Activated CD4-positive, alpha-beta T cell treated with anti-CD3 and anti-CD28 coated beads, Interleukin-2, amount 10 ng/mL, durations not matched to agents 24 days and 14 days (primary cell): ENCODE measurements at regions of chr11 and their contacts with region 1.

Region 1: GRCh38 chr11:61061081-61061826 is 41.0 kb upstream of the CD5 start:
- DNase-seq: peak; percentile 91
- H3K4me3 Mint-ChIP-seq: peak overlapping the region; percentile 73
- H3K27ac Mint-ChIP-seq: peak overlapping the region; percentile 91
- H3K4me1 Mint-ChIP-seq: peaks cover 66% of the 10 kb centered on the region
- H3K27me3 Mint-ChIP-seq: peaks cover 3% of the 10 kb centered on the region

Region 2: DNA sequence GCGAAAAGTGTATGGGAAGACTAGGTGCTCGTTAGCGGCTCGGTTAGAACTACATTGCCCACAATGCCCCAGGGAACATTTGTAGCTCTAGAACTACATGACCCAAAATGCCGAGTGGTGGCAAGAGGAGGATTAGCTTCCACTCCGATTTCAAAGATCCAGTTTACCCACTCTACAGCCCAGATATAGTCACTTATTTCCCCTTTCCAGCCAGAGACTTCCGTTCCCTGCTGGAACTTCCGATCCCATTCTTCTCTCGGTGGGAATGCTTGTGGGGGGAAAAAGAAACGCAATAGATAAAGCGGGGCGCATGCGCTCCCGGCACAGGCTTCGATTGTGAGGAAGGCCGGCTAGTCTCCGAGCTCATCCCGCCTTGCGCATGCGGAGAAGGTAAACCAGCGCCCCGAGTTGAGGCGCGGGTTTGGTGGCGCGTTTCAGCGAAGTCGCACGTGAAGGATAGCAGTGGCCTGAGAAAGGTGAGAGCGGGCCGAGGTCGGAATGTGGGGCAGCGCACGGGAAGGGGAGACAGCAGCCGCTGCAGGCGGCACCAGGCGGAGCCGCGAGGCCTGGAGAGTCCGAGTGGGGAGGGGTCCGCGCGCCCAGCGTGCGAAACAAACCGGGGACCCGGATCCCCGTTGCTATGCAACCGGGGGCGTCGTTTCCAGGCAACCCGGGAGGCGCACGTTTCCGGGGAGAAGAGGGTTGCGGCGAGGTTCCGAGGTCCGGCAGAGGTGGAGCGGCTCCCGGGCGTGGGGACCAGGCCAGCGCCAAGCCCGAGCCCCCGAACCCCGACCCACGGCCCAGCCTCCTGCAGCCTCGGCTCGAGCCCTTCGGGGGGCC is 147.2 kb before region 1 on chr11 and contains the start of gene TMEM109:
- intact Hi-C with region 1: loop called (anchors 1 kb)
- DNase-seq: peak; percentile 96
- H3K4me3 Mint-ChIP-seq: peak within 1 kb of the TSS; percentile 93
- H3K27ac Mint-ChIP-seq: peak within 1 kb of the TSS; percentile 98
- H3K4me1 Mint-ChIP-seq: peaks cover 42% of the 10 kb centered on the region
- H3K27me3 Mint-ChIP-seq: peaks cover 5% of the 10 kb centered on the region
- total RNA-seq, gene TMEM109: 144 and 147 TPM in 2 replicates

Region 3: GRCh38 chr11:60985991-60986915 is 75.0 kb before region 1 on chr11:
- intact Hi-C with region 1: loop called (anchors 1 kb)
- DNase-seq: peak; percentile 95
- H3K4me3 Mint-ChIP-seq: peak overlapping the region; percentile 84
- H3K27ac Mint-ChIP-seq: peak overlapping the region; percentile 94
- H3K4me1 Mint-ChIP-seq: peaks cover 88% of the 10 kb centered on the region
- H3K27me3 Mint-ChIP-seq: no peaks in the 10 kb centered on the region

Region 4: DNA sequence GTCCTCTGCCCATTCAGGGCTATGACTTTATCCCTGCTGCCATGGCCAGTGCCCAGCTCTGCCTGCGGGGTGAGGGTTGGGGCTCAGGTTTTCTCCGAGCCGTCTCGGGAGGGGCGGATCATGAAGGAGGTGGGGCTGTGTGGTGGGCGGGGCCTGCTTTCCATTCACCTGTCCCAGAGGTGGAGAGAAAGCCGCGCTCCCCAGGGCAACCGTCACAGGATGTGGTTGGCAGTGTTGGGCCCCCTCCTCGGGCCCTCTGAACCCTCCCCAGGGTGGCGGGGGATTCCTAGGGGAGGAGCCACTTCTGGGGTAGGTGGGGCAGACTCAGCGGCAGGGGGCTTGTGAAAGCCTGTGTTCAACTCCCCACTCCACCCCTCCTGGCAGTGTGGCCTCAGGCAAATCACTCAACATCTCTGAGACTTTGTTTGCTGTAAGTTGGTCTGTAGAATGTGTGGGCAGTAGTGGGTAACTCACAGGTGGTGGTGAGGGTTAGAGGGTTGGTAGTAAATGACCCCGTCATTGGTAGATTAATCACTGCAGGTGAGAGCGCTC is 39.5 kb before region 1 on chr11:
- intact Hi-C with region 1: loop called (anchors 1 kb)
- DNase-seq: peak; percentile 95
- H3K4me3 Mint-ChIP-seq: peak overlapping the region; percentile 67
- H3K27ac Mint-ChIP-seq: peak overlapping the region; percentile 90
- H3K4me1 Mint-ChIP-seq: peaks cover 71% of the 10 kb centered on the region
- H3K27me3 Mint-ChIP-seq: no peaks in the 10 kb centered on the region

Region 5: DNA sequence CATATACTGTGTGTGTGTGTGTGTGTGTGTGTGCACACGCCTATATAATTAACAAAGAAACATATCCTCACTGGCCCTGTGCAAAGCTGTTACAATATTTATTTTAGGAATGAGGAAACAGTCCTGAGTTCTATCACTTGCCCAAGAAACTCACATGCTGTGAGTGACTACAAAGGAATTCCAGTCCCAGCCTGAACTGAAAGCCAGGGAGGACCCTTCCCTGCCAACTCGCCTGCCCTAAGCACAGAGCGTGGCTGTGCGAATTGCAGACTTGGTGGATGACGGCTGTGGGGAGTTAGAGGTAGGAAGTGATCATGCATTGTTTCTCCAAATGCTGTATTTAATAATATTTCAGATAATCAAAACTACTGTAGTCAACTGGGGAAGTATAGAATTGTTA is 14.6 kb after region 1 on chr11:
- intact Hi-C with region 1: loop called (anchors 1 kb)
- DNase-seq: peak; percentile 73
- H3K4me3 Mint-ChIP-seq: peak overlapping the region; percentile 57
- H3K27ac Mint-ChIP-seq: peak overlapping the region; percentile 71
- H3K4me1 Mint-ChIP-seq: peaks cover 76% of the 10 kb centered on the region
- H3K27me3 Mint-ChIP-seq: no peaks in the 10 kb centered on the region

Region 6: GRCh38 chr11:61091373-61092279 is 30.4 kb after region 1 on chr11:
- intact Hi-C with region 1: loop called (anchors 1 kb)
- DNase-seq: peak; percentile 86
- H3K4me3 Mint-ChIP-seq: peak overlapping the region; percentile 93
- H3K27ac Mint-ChIP-seq: peak overlapping the region; percentile 100
- H3K4me1 Mint-ChIP-seq: peaks cover 69% of the 10 kb centered on the region
- H3K27me3 Mint-ChIP-seq: no peaks in the 10 kb centered on the region

Region 7: GRCh38 chr11:61111786-61112517 is 50.7 kb after region 1 on chr11:
- intact Hi-C with region 1: loop called (anchors 1 kb)
- DNase-seq: peak; percentile 92
- H3K4me3 Mint-ChIP-seq: no peak overlapping the region
- H3K27ac Mint-ChIP-seq: peak overlapping the region; percentile 90
- H3K4me1 Mint-ChIP-seq: peaks cover 91% of the 10 kb centered on the region
- H3K27me3 Mint-ChIP-seq: no peaks in the 10 kb centered on the region

Region 8: DNA sequence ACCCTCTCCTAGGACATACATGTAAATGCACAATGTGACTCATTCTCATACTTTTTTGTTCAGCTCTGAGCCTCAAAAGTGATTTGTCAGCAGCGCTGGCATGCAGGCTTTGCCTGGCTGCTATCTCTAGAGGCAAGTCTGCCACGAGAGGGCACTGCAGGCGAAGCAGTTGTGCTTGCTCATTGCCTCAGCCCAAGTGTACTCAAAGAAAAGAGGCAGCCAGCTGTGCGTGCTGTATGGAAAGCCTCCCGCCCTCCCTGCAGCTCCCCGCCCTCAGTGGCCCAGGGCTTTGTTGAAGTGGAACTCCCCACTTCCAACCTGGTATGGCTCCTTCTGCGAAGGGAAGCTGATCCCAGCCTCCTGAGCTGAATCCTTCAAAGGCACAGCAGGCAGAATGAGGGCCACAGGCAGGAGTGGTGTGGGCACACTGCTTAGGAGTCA is 385.0 kb after region 1 on chr11:
- intact Hi-C with region 1: no loop called
- DNase-seq: peak; percentile 93
- H3K4me3 Mint-ChIP-seq: no peak overlapping the region
- H3K27ac Mint-ChIP-seq: peak overlapping the region; percentile 37
- H3K4me1 Mint-ChIP-seq: peaks cover 21% of the 10 kb centered on the region
- H3K27me3 Mint-ChIP-seq: no peaks in the 10 kb centered on the region

Region 9: DNA sequence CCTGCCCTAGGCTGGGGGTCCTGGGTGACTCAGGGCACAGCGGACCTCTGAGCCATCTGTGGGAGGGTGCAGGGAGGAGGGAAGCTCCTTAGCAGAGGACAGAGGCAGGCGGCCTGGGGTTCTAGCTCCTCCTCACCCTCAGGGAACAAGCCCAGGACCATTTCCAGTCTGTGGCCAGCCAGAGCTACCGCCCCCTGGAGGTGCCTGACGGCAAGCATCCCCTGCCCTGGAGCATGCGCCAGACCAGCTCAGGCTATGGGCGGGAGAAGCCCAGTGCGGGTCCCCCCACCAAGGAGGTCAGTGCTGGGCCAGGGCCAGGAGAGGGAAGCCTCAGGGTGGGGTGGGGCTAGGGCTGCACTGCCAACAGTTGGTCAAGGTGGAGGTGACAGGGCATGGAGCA is 421.3 kb after region 1 on chr11:
- intact Hi-C with region 1: no loop called
- DNase-seq: peak; percentile 73
- H3K4me3 Mint-ChIP-seq: no peak overlapping the region
- H3K27ac Mint-ChIP-seq: no peak overlapping the region
- H3K4me1 Mint-ChIP-seq: peaks cover 2% of the 10 kb centered on the region
- H3K27me3 Mint-ChIP-seq: no peaks in the 10 kb centered on the region